ENCODE measurements at regions of chr2 and their contacts with region 1.

Region 1: GRCh38 chr2:231557571-231558237 is 27.5 kb upstream of the NMUR1 start:
- DNase-seq: peak; percentile 61
- ATAC-seq: peak; percentile 88
- H3K4me3 ChIP-seq: no peak overlapping the region
- H3K27ac ChIP-seq: no peak overlapping the region
- H3K4me1 ChIP-seq: no peaks in the 10 kb centered on the region
- H3K27me3 ChIP-seq: no peaks in the 10 kb centered on the region
- CTCF ChIP-seq: peak; percentile 73 to 82 (median 77)
- POLR2A ChIP-seq: no peak
- RAD21 ChIP-seq: peak; percentile 87

Region 2: DNA sequence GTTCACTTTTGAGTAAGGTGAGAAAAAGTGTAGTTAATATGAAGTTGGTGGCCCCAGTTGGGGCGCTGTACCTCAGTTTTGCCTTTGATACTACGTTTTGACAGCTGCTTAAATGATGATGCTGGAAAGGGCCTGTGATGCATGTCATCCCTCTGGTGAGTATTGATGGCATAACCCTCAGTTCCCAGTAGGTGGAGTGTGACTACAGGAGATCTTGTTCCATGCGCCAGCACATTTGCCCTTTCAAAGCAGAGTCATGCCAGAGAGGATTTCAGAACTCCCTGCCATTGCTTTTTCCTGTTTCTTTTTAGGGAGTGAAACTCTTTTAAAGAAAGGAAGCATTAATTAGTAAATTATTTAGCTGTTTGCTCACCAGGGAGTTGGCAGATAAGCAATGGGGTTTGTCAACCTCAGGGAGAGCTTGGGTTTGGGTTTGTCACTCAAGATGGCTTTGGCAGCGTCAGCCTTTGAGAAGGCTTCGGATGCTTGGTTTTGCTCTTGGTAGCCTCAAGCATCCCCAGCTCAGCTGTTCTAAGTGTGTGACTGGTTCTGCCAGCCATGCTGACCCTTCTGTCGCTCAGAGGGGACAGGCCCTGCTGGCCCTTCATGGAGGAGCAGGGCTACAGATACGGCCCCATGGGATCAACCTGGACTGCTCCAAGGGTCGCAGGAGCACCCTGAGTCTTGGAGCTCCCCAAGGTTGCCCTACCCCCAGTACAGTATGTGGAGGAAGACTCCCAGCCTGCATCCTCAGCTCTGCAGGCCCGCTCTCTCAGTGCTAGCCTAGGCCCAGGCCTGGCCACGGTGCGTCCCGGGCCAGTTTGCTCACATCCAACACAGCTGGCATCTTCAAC is 330.2 kb before region 1 on chr2:
- CTCF ChIA-PET with region 1: no interaction called
- POLR2A ChIA-PET with region 1: no interaction called
- RAD21 ChIA-PET with region 1: no interaction called
- intact Hi-C with region 1: loop called (anchors 5 kb)
- DNase-seq: peak; percentile 56
- ATAC-seq: peak; percentile 99
- H3K4me3 ChIP-seq: no peak overlapping the region
- H3K27ac ChIP-seq: no peak overlapping the region
- H3K4me1 ChIP-seq: no peaks in the 10 kb centered on the region
- H3K27me3 ChIP-seq: no peaks in the 10 kb centered on the region
- CTCF ChIP-seq: peak; percentile 77 to 80 (median 80)
- POLR2A ChIP-seq: no peak
- RAD21 ChIP-seq: peak; percentile 92

Region 3: DNA sequence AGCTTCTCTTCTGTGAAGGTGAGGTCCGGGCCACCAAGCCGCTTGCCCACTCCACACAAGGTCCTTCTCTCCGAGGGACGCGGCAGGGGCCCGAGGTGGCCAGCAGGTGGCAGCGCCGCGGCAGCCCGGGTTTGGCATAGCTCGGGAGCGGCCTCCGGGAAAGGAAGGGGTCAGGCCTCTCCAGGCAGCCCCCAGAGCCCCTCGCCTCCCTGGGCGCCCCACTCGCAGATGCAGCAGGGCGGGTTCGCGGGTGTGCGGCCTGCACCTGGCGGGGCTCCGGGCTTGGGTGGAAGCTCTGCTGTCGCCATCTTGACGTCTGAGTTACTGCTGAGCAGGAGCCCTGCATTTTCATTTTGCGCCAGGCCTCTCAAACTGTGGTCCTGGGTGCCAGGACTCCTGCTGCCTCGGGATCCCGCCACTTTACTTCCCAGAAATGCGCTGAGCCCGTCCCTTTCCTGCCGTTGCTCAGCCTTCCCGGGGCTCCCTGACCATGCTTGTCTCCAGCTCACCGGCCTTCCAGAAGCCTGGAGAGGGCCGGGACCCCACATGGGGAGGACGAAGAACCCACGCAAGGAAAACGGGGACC is 74.8 kb before region 1 on chr2:
- CTCF ChIA-PET with region 1: interaction called, 7 read pairs
- POLR2A ChIA-PET with region 1: no interaction called
- RAD21 ChIA-PET with region 1: no interaction called
- intact Hi-C with region 1: loop called (anchors 2 kb)
- DNase-seq: no peak
- ATAC-seq: peak; percentile 98
- H3K4me3 ChIP-seq: no peak overlapping the region
- H3K27ac ChIP-seq: no peak overlapping the region
- H3K4me1 ChIP-seq: peaks cover 0 to 7% of the 10 kb centered on the region in 2 experiments; a peak in 1 of 4 replicates
- H3K27me3 ChIP-seq: no peaks in the 10 kb centered on the region
- CTCF ChIP-seq: peak; percentile 55 to 98 (median 85)
- POLR2A ChIP-seq: no peak
- RAD21 ChIP-seq: peak; percentile 57

Measured in HCT116 (cell line).